ENCODE measurements at regions of chr2 and their contacts with region 1.

Region 1: DNA sequence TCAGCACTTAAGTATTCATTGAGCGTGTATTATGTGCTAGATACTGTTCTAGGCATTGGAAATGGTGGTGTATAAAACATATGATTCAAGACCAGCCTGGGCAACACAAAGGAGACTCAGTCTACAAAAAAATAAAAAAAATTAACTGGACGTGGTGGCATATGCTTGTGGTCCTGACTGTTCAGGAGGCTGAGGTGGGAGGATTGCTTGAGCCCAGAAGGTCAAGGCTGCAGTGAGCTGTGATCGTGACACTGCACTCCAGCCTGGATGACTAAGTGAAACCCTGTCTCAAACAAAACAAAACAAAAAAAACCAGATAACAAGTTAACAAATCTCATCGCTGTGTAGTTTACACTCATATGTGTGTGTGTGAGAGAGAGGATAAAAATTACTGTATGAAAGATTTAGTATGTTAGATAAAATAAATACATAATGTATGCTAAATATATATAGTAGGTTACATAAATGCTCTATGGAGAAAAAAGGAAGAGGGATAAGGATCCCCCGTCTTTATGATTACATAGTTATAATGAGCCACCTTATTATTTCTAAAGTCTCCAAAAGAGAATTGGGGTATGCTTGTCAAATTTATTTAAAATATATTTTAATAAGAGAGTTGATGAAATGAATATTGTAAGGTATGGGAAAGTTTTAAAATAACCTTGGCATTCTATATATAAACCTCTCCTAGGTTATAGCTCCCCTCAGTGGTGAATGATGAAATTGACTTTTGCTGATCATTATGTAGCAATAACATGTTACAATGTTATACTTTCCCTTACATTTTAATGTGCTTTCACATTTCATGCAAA is 69.2 kb downstream of the EHBP1 start:
- DNase-seq: peak; percentile 6 to 46 (median 15)
- H3K4me3 ChIP-seq: no peak overlapping the region
- H3K4me3 Mint-ChIP-seq: no peak overlapping the region
- H3K27ac ChIP-seq: no peak overlapping the region
- H3K27ac Mint-ChIP-seq: peak overlapping the region in 1 of 7 donors; percentile 30
- H3K4me1 ChIP-seq: peaks cover 5% of the 10 kb centered on the region in 2 donors
- H3K4me1 Mint-ChIP-seq: peaks cover 13% of the 10 kb centered on the region
- H3K27me3 ChIP-seq: no peaks in the 10 kb centered on the region
- H3K27me3 Mint-ChIP-seq: no peaks in the 10 kb centered on the region
- CTCF ChIP-seq: peak; percentile 95

Region 2: DNA sequence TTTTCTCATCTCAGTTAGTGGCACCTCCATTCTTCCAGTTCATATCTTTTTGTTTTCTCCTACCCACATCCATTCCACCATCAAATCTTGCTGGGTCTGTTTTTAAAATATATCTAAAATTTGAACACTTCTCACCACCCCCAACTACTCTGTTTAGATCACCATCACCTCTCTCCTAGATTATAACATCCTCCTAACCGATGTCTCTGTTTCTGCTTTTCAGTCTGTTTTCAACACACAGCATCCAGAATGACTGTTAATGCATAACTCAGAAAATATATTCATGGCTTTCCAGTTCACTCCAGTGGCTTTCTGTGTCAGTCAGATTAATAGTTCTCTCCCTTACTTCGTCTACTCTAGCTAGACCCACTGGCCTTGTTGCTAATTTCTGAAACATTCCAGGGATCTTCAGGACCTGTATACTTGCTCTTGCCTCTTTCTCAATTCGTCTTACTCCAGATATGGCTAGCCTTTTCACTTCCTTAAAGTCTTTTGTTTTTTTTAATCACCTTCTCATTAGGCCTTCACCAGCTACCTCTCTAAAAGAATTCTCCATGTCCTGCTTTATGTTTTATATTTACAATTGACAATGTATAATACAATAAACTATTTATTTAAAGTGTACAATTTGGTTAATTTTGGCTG is 764.0 kb before region 1 on chr2:
- intact Hi-C with region 1: no loop called
- DNase-seq: peak in 1 of 3 donors; percentile 10
- H3K4me3 ChIP-seq: no peak overlapping the region
- H3K4me3 Mint-ChIP-seq: no peak overlapping the region
- H3K27ac ChIP-seq: peak overlapping the region in 1 of 2 donors; percentile 55
- H3K27ac Mint-ChIP-seq: peak overlapping the region in 6 of 7 donors; percentile 12 to 79 (median 36)
- H3K4me1 ChIP-seq: peaks cover 26 to 35% of the 10 kb centered on the region in 2 donors
- H3K4me1 Mint-ChIP-seq: peaks cover 35% of the 10 kb centered on the region
- H3K27me3 ChIP-seq: no peaks in the 10 kb centered on the region
- H3K27me3 Mint-ChIP-seq: no peaks in the 10 kb centered on the region
- CTCF ChIP-seq: no peak

Region 3: DNA sequence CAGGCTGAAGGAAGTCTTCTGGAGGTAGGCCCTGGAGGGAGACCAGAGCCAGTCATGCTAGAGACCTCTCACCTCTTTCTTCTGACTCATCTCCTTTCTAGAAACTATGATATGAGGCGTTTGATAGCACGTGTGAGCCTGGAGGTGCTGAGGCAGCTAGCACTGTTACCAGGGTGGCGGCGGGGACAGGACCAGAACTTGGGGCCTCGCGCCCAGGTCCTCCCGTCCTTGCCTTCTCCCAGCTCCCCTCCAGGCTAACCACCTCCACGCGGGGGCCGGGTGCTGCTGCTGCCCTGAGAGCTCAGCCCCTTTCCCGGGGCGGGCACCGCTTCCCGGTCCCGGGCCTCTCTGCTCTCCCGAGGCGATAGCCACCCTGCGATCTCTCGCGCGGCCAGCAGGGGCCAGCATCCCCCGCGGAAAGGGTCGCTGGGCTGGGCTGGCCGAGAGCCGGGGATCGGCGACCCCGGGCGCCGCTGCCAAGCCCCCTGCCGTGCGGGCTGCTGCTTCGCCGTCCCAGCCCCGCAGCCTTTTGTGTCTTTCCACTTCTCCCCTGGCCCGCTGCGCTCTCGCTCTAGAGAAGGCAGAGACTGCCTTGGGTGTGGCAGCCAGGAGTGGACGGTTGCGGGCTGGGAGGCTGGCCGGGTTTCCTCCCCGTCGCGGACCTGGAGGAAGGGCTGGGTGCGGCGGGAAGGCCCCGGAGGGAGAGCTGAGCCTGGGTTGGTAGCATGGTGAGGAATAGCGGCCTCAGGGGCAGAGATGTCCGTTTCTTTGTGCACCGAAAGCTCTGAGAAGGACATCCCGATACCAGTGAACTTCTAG is 317.8 kb before region 1 on chr2:
- intact Hi-C with region 1: loop called (anchors 5 kb)
- DNase-seq: peak; percentile 19 to 44 (median 32)
- H3K4me3 ChIP-seq: peak overlapping the region; percentile 23 to 74 (median 42)
- H3K4me3 Mint-ChIP-seq: peak overlapping the region; percentile 69 to 80
- H3K27ac ChIP-seq: no peak overlapping the region
- H3K27ac Mint-ChIP-seq: peak overlapping the region in 1 of 7 donors; percentile 66
- H3K4me1 ChIP-seq: peaks cover 8 to 13% of the 10 kb centered on the region in 2 donors
- H3K4me1 Mint-ChIP-seq: peaks cover 10% of the 10 kb centered on the region
- H3K27me3 ChIP-seq: no peaks in the 10 kb centered on the region
- H3K27me3 Mint-ChIP-seq: peaks cover 4 to 17% (median 5%) of the 10 kb centered on the region in 3 donors
- CTCF ChIP-seq: peak; percentile 97

Region 4: DNA sequence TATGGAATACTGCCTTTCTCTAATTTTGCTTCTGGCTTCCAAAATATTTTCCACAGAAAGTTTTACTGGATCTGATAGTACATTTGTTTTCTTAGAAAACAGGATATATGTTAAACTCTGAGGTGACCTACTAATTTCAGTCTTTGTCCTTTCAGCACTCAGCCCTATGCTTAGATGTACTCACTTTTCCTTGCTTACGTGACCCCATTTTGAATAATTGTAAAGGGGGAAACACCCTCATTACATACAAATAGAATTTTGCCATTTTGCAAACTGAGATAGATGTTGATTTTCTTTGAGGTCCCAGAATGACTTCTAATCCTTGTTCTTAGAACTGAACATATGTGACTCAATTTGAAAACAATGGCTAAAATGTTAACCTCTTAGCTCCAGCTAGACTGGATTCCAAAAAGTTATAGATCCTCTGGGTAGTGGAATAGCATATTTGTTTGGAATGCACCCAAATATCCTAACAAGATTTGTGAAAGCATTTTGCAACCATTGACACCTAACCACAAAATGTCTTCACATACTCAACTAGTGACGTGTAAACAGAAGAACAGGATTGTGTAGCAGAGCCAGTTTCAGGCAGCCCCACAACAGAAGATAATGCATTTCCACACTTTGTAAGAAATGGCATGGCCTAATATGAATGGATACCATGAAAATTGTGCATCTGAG is 114.0 kb before region 1 on chr2:
- intact Hi-C with region 1: no loop called
- DNase-seq: no peak
- H3K4me3 ChIP-seq: no peak overlapping the region
- H3K4me3 Mint-ChIP-seq: no peak overlapping the region
- H3K27ac ChIP-seq: no peak overlapping the region
- H3K27ac Mint-ChIP-seq: no peak overlapping the region
- H3K4me1 ChIP-seq: no peaks in the 10 kb centered on the region
- H3K4me1 Mint-ChIP-seq: peaks cover 15% of the 10 kb centered on the region
- H3K27me3 ChIP-seq: no peaks in the 10 kb centered on the region
- H3K27me3 Mint-ChIP-seq: no peaks in the 10 kb centered on the region
- CTCF ChIP-seq: no peak